Activated CD8-positive, alpha-beta T cell treated with anti-CD3 and anti-CD28 coated beads, Interleukin-2, amount 10 ng/mL, durations not matched to agents 7 days and 5 days (primary cell): ENCODE measurements at regions of chr19 and their contacts with region 1.

Region 1: DNA sequence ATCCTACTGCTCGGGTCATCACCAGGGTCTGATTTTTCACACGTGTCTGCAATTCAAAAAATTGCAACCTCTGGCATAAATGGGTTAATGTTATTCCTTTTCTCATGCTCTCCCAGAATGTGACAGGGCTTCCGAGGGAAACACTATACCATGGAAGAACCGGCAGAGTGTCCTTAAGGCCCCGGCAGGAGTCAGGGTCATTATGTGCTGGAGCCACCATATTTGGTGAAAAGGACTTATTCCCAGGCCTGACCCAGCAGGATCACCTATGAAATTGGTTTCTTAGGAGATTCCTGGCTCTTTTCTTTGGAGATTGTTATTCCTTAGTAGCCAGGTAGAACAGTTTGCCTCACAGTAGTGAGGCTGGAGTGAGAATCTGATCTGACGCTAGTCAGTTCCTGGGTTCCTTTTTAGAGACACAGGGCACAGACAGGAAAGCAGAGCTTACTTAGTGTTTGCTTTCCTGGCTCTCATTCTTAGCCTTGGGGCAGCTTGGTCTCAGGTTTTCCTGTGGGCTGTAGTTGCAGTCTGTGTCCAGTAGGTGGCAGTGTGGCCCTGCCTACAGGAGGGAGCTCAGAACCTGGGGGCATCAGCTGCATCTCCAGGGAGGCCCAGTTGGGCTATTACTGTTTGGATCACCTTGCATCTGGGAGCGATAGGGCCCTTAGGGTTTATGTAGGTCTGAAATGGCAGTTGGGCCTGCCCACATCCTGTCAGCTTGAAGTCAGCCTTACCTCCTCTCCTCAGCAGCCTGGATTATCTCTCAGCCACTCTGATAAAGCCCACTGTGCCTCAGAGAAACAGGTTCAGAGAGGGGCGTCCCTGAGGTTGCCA is 12.4 kb downstream of the SNRNP70 start:
- DNase-seq: peak; percentile 85
- ATAC-seq: peak; percentile 87
- H3K4me3 Mint-ChIP-seq: no peak overlapping the region
- H3K27ac Mint-ChIP-seq: peak overlapping the region; percentile 70
- H3K4me1 Mint-ChIP-seq: peaks cover 21% of the 10 kb centered on the region
- H3K27me3 Mint-ChIP-seq: no peaks in the 10 kb centered on the region

Region 2: DNA sequence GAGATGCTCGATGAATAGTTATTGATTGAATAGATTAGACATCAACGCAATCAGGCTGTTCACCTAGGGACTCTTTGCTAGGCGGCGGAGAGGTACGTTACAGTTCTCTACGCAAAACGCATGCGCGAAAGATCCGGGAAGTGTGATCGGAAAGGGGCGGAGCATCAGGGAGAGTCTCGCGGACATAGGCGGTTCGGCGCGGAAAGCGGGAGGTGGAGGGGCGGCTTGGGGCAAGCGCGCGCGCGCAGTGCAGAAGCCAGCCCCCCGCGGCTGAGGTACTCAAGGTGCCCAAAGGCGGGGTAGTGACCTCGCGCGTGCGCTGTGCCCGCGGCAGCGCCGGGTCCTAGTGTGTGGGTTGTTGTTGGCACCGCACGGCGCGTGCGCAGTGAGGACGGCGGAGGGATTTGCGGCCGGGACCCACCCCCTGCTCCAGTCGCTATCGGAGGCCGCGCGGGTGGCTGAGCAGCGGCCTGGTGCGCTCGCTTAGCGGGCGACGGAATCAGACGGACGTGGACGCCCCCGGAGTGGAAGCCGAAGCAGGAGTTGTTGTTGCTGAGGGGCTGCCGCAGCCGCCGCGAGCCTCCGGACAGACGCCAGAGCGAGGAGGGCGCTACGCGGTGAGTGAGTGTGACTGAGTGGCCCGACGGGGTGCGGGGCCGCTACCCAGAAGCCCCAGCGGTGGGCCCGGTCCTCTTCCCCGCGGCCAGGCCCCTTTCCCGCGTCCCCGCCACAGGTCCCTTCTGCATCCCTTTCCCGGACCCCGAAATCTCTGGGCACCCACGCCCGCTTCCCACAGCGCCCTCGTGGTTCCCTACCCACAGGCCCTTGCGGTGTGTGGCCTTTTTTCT is 12.4 kb before region 1 on chr19 and contains the start of gene SNRNP70:
- CTCF ChIA-PET with region 1: interaction called, 23 read pairs
- POLR2A ChIA-PET with region 1: interaction called, 4 read pairs
- DNase-seq: peak; percentile 99
- ATAC-seq: peak; percentile 94
- H3K4me3 Mint-ChIP-seq: peak within 1 kb of the TSS; percentile 98
- H3K27ac Mint-ChIP-seq: peak within 1 kb of the TSS; percentile 93
- H3K4me1 Mint-ChIP-seq: peaks cover 26% of the 10 kb centered on the region
- H3K27me3 Mint-ChIP-seq: no peaks in the 10 kb centered on the region
- total RNA-seq, gene SNRNP70: 177 to 193 TPM

Region 3: DNA sequence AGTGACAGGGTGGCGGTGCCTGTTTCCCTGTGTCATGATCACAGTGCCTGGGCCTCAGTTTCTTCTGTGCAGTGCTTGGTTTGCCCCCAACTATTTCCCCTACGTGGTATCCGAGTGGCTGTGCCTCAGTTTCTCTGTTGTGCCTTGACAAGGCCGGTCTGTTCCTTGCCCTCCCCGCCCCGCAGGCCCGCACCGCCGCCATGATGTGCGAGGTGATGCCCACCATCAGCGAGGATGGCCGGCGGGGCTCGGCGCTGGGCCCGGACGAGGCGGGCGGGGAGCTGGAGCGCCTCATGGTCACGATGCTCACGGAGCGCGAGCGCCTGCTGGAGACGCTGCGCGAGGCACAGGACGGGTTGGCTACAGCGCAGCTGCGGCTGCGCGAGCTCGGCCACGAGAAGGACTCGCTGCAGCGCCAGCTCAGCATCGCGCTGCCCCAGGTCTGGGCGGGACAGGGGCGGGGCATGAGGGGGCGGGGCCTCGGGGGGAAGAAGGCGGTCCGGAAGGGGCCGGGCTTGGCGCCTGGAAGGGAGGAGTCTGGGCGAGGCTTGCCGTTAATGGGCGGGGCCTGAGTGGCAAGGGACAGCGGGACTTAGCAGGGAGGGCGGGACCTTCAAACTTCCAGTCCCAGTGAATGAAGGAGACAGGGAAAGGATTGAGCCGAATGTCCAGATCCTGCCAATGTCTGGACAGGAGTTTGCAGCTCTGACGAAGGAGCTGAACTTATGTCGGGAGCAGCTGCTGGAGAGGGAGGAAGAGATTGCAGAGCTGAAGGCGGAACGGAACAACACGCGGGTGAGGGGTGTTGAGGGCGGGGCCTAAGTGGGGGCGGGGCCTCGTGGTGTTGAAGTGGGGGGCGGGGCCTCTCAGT is 30.2 kb after region 1 on chr19:
- CTCF ChIA-PET with region 1: interaction called, 12 read pairs
- POLR2A ChIA-PET with region 1: no interaction called
- DNase-seq: peak; percentile 95
- ATAC-seq: peak; percentile 97
- H3K4me3 Mint-ChIP-seq: peak overlapping the region; percentile 83
- H3K27ac Mint-ChIP-seq: peak overlapping the region; percentile 87
- H3K4me1 Mint-ChIP-seq: peaks cover 15% of the 10 kb centered on the region
- H3K27me3 Mint-ChIP-seq: peaks cover 3% of the 10 kb centered on the region

Region 4: GRCh38 chr19:49173198-49173597 is 75.5 kb after region 1 on chr19:
- CTCF ChIA-PET with region 1: no interaction called
- POLR2A ChIA-PET with region 1: no interaction called
- DNase-seq: no peak
- ATAC-seq: no peak
- H3K4me3 Mint-ChIP-seq: no peak overlapping the region
- H3K27ac Mint-ChIP-seq: no peak overlapping the region
- H3K4me1 Mint-ChIP-seq: peaks cover 4% of the 10 kb centered on the region
- H3K27me3 Mint-ChIP-seq: no peaks in the 10 kb centered on the region

Region 5: DNA sequence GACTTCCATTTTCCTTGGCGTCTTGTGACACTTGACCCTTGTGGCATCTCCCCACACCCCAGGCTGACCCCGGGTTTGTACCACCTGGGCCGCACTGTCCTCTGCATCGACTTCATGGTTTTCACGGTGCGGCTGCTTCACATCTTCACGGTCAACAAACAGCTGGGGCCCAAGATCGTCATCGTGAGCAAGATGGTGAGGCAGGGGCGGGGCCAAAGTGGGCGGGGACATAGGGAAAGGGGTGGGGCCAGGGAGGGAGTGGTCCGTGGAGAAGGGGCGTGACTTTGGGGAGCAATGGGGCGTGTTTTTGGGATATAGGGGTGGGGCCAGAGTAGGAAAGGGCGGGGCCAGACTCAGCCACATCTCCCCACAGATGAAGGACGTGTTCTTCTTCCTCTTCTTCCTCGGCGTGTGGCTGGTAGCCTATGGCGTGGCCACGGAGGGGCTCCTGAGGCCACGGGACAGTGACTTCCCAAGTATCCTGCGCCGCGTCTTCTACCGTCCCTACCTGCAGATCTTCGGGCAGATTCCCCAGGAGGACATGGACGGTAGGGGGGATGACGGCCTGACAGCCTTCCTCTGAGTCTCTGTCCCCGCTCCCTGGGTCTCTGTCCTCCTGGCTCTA is 102.7 kb after region 1 on chr19:
- CTCF ChIA-PET with region 1: interaction called, 70 read pairs
- POLR2A ChIA-PET with region 1: no interaction called
- DNase-seq: peak; percentile 23
- ATAC-seq: peak; percentile 62
- H3K4me3 Mint-ChIP-seq: no peak overlapping the region
- H3K27ac Mint-ChIP-seq: no peak overlapping the region
- H3K4me1 Mint-ChIP-seq: peaks cover 8% of the 10 kb centered on the region
- H3K27me3 Mint-ChIP-seq: no peaks in the 10 kb centered on the region

Region 6: GRCh38 chr19:49224856-49225255 is 127.2 kb after region 1 on chr19:
- CTCF ChIA-PET with region 1: interaction called, 19 read pairs
- POLR2A ChIA-PET with region 1: no interaction called
- DNase-seq: peak; percentile 59
- ATAC-seq: peak; percentile 59
- H3K4me3 Mint-ChIP-seq: no peak overlapping the region
- H3K27ac Mint-ChIP-seq: no peak overlapping the region
- H3K4me1 Mint-ChIP-seq: peaks cover 10% of the 10 kb centered on the region
- H3K27me3 Mint-ChIP-seq: peaks cover 8% of the 10 kb centered on the region